Naive thymus-derived CD4-positive, alpha-beta T cell (primary cell): ENCODE measurements at regions of chr19 and their contacts with region 1.

Region 1: GRCh38 chr19:10251792-10252694 is at the start of gene MRPL4:
- DNase-seq: peak; percentile 82 to 98 (median 96)
- ATAC-seq: peak; percentile 98
- H3K4me3 ChIP-seq: peak within 1 kb of the TSS; percentile 90
- H3K4me3 Mint-ChIP-seq: peak within 1 kb of the TSS; percentile 93 to 100 (median 98)
- H3K27ac ChIP-seq: peak within 1 kb of the TSS; percentile 78
- H3K27ac Mint-ChIP-seq: peak within 1 kb of the TSS; percentile 92 to 99 (median 97)
- H3K4me1 ChIP-seq: peaks cover 6 to 12% of the 10 kb centered on the region in 2 donors
- H3K4me1 Mint-ChIP-seq: peaks cover 6 to 33% (median 24%) of the 10 kb centered on the region in 7 donors
- H3K27me3 ChIP-seq: no peaks in the 10 kb centered on the region
- H3K27me3 Mint-ChIP-seq: no peaks in the 10 kb centered on the region
- total RNA-seq, gene MRPL4: 36.8 to 70.5 (median 43.0) TPM

Region 2: GRCh38 chr19:10027158-10027693 is 224.8 kb before region 1 on chr19:
- CTCF ChIA-PET with region 1: interaction called, 3 read pairs
- POLR2A ChIA-PET with region 1: no interaction called
- intact Hi-C with region 1: loop called (anchors 1 to 5 kb)
- DNase-seq: no peak
- ATAC-seq: no peak
- H3K4me3 ChIP-seq: no peak overlapping the region
- H3K4me3 Mint-ChIP-seq: no peak overlapping the region
- H3K27ac ChIP-seq: no peak overlapping the region
- H3K27ac Mint-ChIP-seq: no peak overlapping the region
- H3K4me1 ChIP-seq: no peaks in the 10 kb centered on the region
- H3K4me1 Mint-ChIP-seq: peaks cover 0 to 4% (median 0%) of the 10 kb centered on the region in 7 donors
- H3K27me3 ChIP-seq: no peaks in the 10 kb centered on the region
- H3K27me3 Mint-ChIP-seq: peaks cover 3 to 24% (median 12%) of the 10 kb centered on the region in 5 donors

Region 3: GRCh38 chr19:10106100-10106936 is 145.7 kb before region 1 on chr19 and contains the start of gene PPAN:
- CTCF ChIA-PET with region 1: interaction called, 4 read pairs
- POLR2A ChIA-PET with region 1: interaction called, 12 read pairs
- intact Hi-C with region 1: loop called in 1 of 2 experiments (anchors 5 kb)
- DNase-seq: peak; percentile 88 to 98 (median 97)
- ATAC-seq: peak; percentile 86
- H3K4me3 ChIP-seq: peak within 1 kb of the TSS; percentile 60
- H3K4me3 Mint-ChIP-seq: peak within 1 kb of the TSS; percentile 75 to 91 (median 88)
- H3K27ac ChIP-seq: peak within 1 kb of the TSS; percentile 86
- H3K27ac Mint-ChIP-seq: peak within 1 kb of the TSS; percentile 92 to 98 (median 97)
- H3K4me1 ChIP-seq: peaks cover 53 to 65% of the 10 kb centered on the region in 2 donors
- H3K4me1 Mint-ChIP-seq: peaks cover 32 to 61% (median 56%) of the 10 kb centered on the region in 7 donors
- H3K27me3 ChIP-seq: no peaks in the 10 kb centered on the region
- H3K27me3 Mint-ChIP-seq: no peaks in the 10 kb centered on the region
- total RNA-seq, gene PPAN: 87.6 to 122 (median 109) TPM

Region 4: DNA sequence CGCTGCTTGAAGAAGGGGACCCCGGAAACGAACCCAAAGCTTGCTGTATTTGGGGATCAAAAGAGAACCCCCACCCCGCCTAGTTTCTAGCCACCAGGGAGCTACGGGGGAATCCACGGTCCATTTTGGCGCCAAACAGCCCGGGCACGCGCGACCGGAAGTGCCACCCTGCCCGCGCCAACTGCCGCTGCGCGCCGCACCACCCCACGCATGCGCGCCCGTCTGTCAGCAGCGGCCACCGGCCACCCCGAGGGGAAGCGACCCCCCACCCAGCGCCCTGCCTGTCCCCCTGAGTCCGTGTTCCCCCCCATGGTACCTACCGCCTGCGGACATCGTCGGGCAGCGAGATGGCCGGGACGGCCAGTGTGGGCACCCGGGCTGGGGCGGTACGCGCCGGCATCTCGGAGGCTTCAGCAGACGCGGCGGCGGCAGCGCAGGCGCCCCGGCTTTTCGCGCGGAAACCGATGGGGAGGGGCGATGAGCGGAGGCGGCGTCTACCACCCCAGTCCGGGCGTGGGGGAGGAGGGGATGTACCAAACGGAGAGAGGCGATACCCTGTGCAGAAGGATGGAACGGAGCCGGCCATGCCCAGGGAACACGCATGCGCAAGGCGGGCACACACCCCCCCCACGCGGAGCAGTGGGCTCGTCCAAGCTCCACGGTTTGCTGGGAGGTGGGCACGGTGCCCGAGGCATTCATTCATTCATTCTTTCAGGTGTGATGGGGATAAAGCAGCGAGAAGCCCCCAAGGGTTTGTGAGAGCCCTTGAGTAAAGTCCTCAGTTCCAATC is 57.3 kb before region 1 on chr19 and contains the start of gene DNMT1:
- CTCF ChIA-PET with region 1: interaction called, 6 read pairs
- POLR2A ChIA-PET with region 1: no interaction called
- intact Hi-C with region 1: loop called (anchors 1 kb)
- DNase-seq: peak; percentile 87 to 98 (median 93)
- ATAC-seq: peak; percentile 99
- H3K4me3 ChIP-seq: peak within 1 kb of the TSS; percentile 88
- H3K4me3 Mint-ChIP-seq: peak within 1 kb of the TSS; percentile 87 to 98 (median 95)
- H3K27ac ChIP-seq: peak within 1 kb of the TSS; percentile 81
- H3K27ac Mint-ChIP-seq: peak within 1 kb of the TSS; percentile 82 to 96 (median 92)
- H3K4me1 ChIP-seq: peaks cover 7 to 20% of the 10 kb centered on the region in 2 donors
- H3K4me1 Mint-ChIP-seq: peaks cover 14 to 48% (median 40%) of the 10 kb centered on the region in 7 donors
- H3K27me3 ChIP-seq: no peaks in the 10 kb centered on the region
- H3K27me3 Mint-ChIP-seq: no peaks in the 10 kb centered on the region
- total RNA-seq, gene DNMT1: 175 to 334 (median 194) TPM

Region 5: GRCh38 chr19:10292206-10292788 is 40.3 kb after region 1 on chr19:
- CTCF ChIA-PET with region 1: no interaction called
- POLR2A ChIA-PET with region 1: no interaction called
- intact Hi-C with region 1: no loop called
- DNase-seq: peak in 8 of 9 donors; percentile 49 to 85 (median 54)
- ATAC-seq: peak; percentile 74
- H3K4me3 ChIP-seq: peak overlapping the region; percentile 54
- H3K4me3 Mint-ChIP-seq: peak overlapping the region; percentile 70 to 87 (median 80)
- H3K27ac ChIP-seq: no peak overlapping the region
- H3K27ac Mint-ChIP-seq: peak overlapping the region in 4 of 9 donors; percentile 34 to 88 (median 68)
- H3K4me1 ChIP-seq: peaks cover 62 to 66% of the 10 kb centered on the region in 2 donors
- H3K4me1 Mint-ChIP-seq: peaks cover 44 to 71% (median 60%) of the 10 kb centered on the region in 7 donors
- H3K27me3 ChIP-seq: peaks cover 8 to 55% of the 10 kb centered on the region in 2 donors
- H3K27me3 Mint-ChIP-seq: peaks cover 43 to 81% (median 52%) of the 10 kb centered on the region in 5 donors

Region 6: DNA sequence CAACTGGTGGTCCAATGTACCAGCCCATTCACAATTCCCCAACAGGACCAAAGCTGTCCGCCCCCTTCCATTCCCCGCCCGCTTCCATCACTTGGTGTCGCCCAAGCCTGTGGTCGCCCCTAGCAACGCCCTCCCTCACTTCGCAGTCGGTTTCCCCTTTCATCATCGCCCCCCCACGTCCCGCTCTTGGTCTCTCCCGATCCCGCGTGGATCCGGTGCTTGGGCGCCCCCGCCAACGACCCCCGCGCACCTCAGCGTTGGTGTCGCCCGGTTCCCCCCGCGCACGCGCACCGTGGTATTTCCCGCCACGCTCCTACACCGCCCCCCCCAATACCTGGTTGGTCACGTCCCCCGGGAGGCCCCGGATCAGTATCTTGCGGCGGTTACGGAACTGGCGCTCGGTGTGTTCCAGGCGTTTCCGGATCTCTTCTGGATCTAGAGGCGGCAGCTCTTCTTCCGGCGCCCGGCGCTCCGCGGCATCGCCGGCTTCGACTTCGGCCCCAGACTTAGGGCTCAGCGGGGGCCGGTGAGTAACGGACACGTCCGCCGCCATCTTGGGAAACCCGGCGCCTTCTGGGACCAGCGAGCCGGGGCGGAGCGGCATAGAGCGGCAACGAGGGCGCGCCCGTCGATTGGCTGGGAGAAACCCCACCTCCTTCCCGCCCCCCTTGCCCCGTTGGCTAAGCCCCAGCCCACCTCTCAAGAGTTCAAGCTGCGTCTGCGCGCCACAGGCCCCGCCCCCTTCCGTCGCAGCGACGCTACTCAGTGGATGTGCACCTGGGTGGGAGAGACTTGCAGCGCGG is 81.1 kb after region 1 on chr19 and contains the start of gene RAVER1:
- CTCF ChIA-PET with region 1: no interaction called
- POLR2A ChIA-PET with region 1: interaction called, 3 read pairs
- intact Hi-C with region 1: loop called in 1 of 2 experiments (anchors 1 kb)
- DNase-seq: peak; percentile 86 to 98 (median 97)
- ATAC-seq: peak; percentile 98
- H3K4me3 ChIP-seq: peak within 1 kb of the TSS; percentile 89
- H3K4me3 Mint-ChIP-seq: peak within 1 kb of the TSS; percentile 89 to 98 (median 93)
- H3K27ac ChIP-seq: peak within 1 kb of the TSS; percentile 91
- H3K27ac Mint-ChIP-seq: peak within 1 kb of the TSS; percentile 85 to 97 (median 95)
- H3K4me1 ChIP-seq: peaks cover 17 to 31% of the 10 kb centered on the region in 2 donors
- H3K4me1 Mint-ChIP-seq: peaks cover 6 to 48% (median 33%) of the 10 kb centered on the region in 7 donors
- H3K27me3 ChIP-seq: no peaks in the 10 kb centered on the region
- H3K27me3 Mint-ChIP-seq: no peaks in the 10 kb centered on the region
- total RNA-seq, gene RAVER1: 43.2 to 81.1 (median 50.2) TPM

Region 7: GRCh38 chr19:10870955-10871603 is 619.0 kb after region 1 on chr19 and contains the start of gene CARM1:
- CTCF ChIA-PET with region 1: interaction called, 3 read pairs
- POLR2A ChIA-PET with region 1: no interaction called
- intact Hi-C with region 1: loop called in 1 of 2 experiments (anchors 2 kb)
- DNase-seq: peak; percentile 99 to 100 (median 99)
- ATAC-seq: peak; percentile 92
- H3K4me3 ChIP-seq: peak within 1 kb of the TSS; percentile 67
- H3K4me3 Mint-ChIP-seq: peak within 1 kb of the TSS; percentile 79 to 91 (median 86)
- H3K27ac ChIP-seq: peak within 1 kb of the TSS; percentile 74
- H3K27ac Mint-ChIP-seq: peak within 1 kb of the TSS; percentile 74 to 96 (median 88)
- H3K4me1 ChIP-seq: peaks cover 10 to 14% of the 10 kb centered on the region in 2 donors
- H3K4me1 Mint-ChIP-seq: peaks cover 5 to 33% (median 25%) of the 10 kb centered on the region in 7 donors
- H3K27me3 ChIP-seq: no peaks in the 10 kb centered on the region
- H3K27me3 Mint-ChIP-seq: no peaks in the 10 kb centered on the region
- total RNA-seq, gene CARM1: 21.3 to 43.1 (median 27.2) TPM